Esophagus muscularis mucosa (tissue), 4 donors: ENCODE measurements at regions of chr13 and their contacts with region 1.

Region 1: GRCh38 chr13:60431108-60431700 is 34.2 kb downstream of the TDRD3 start:
- DNase-seq: no peak
- H3K4me3 ChIP-seq: no peak overlapping the region
- H3K27ac ChIP-seq: no peak overlapping the region
- H3K4me1 ChIP-seq: no peaks in the 10 kb centered on the region
- H3K27me3 ChIP-seq: no peaks in the 10 kb centered on the region
- CTCF ChIP-seq: peak; percentile 86 to 93 (median 92)
- EP300 ChIP-seq: no peak
- POLR2A ChIP-seq: no peak

Region 2: DNA sequence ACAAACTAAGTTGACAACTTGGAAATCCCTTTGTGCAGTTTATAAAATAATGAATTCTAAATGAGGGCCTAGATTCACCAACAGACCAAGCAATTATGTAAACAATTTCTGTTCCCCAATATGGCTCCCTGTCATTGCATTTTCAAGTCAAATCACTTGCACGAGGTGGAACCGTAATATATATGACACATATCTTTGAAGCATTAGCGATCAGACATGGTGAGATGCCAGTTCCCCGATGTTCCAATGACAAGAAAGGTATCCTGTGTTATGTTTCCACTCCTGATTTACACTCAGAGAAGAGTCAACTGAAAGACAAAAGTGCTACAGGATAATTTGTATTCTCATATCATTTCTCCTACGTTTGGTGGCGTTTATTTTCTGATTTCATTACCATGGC is 142.6 kb before region 1 on chr13:
- intact Hi-C with region 1: no loop called
- DNase-seq: no peak
- H3K4me3 ChIP-seq: no peak overlapping the region
- H3K27ac ChIP-seq: no peak overlapping the region
- H3K4me1 ChIP-seq: no peaks in the 10 kb centered on the region
- H3K27me3 ChIP-seq: no peaks in the 10 kb centered on the region
- CTCF ChIP-seq: no peak
- EP300 ChIP-seq: no peak
- POLR2A ChIP-seq: no peak

Region 3: GRCh38 chr13:60396783-60397703 is 34.2 kb before region 1 on chr13 and contains the start of gene TDRD3:
- intact Hi-C with region 1: loop called (anchors 2 kb)
- DNase-seq: peak; percentile 93
- H3K4me3 ChIP-seq: peak within 1 kb of the TSS; percentile 84 to 89 (median 86)
- H3K27ac ChIP-seq: peak within 1 kb of the TSS; percentile 97 to 99 (median 99)
- H3K4me1 ChIP-seq: peaks cover 11 to 31% (median 27%) of the 10 kb centered on the region in 4 donors
- H3K27me3 ChIP-seq: no peaks in the 10 kb centered on the region
- CTCF ChIP-seq: peak; percentile 71 to 85 (median 75)
- EP300 ChIP-seq: no peak
- POLR2A ChIP-seq: peak; percentile 71
- total RNA-seq, gene TDRD3: 16.1 to 35.3 (median 23.0) TPM

Region 4: GRCh38 chr13:60788156-60788829 is 357.1 kb after region 1 on chr13:
- intact Hi-C with region 1: no loop called
- DNase-seq: no peak
- H3K4me3 ChIP-seq: no peak overlapping the region
- H3K27ac ChIP-seq: no peak overlapping the region
- H3K4me1 ChIP-seq: peaks cover 0 to 5% (median 0%) of the 10 kb centered on the region in 4 donors
- H3K27me3 ChIP-seq: no peaks in the 10 kb centered on the region
- CTCF ChIP-seq: no peak
- EP300 ChIP-seq: no peak
- POLR2A ChIP-seq: no peak